ENCODE measurements at regions of chr7 and their contacts with region 1.

Region 1: GRCh38 chr7:22945584-22945983 is 68.3 kb downstream of the HYCC1 start:
- DNase-seq: peak in 1 of 2 donors; percentile 14
- ATAC-seq: no peak
- H3K4me3 ChIP-seq: no peak overlapping the region
- H3K27ac ChIP-seq: no peak overlapping the region
- H3K4me1 ChIP-seq: peaks cover 0 to 9% (median 5%) of the 10 kb centered on the region in 9 donors
- H3K27me3 ChIP-seq: no peaks in the 10 kb centered on the region
- CTCF ChIP-seq: no peak

Region 2: GRCh38 chr7:22980422-22980821 is 34.8 kb after region 1 on chr7:
- intact Hi-C with region 1: no loop called
- DNase-seq: no peak
- ATAC-seq: peak in 1 of 8 donors; percentile 62
- H3K4me3 ChIP-seq: no peak overlapping the region
- H3K27ac ChIP-seq: peak overlapping the region in 1 of 10 donors; percentile 10
- H3K4me1 ChIP-seq: peaks cover 0 to 11% (median 0%) of the 10 kb centered on the region in 9 donors
- H3K27me3 ChIP-seq: no peaks in the 10 kb centered on the region
- CTCF ChIP-seq: no peak

Region 3: DNA sequence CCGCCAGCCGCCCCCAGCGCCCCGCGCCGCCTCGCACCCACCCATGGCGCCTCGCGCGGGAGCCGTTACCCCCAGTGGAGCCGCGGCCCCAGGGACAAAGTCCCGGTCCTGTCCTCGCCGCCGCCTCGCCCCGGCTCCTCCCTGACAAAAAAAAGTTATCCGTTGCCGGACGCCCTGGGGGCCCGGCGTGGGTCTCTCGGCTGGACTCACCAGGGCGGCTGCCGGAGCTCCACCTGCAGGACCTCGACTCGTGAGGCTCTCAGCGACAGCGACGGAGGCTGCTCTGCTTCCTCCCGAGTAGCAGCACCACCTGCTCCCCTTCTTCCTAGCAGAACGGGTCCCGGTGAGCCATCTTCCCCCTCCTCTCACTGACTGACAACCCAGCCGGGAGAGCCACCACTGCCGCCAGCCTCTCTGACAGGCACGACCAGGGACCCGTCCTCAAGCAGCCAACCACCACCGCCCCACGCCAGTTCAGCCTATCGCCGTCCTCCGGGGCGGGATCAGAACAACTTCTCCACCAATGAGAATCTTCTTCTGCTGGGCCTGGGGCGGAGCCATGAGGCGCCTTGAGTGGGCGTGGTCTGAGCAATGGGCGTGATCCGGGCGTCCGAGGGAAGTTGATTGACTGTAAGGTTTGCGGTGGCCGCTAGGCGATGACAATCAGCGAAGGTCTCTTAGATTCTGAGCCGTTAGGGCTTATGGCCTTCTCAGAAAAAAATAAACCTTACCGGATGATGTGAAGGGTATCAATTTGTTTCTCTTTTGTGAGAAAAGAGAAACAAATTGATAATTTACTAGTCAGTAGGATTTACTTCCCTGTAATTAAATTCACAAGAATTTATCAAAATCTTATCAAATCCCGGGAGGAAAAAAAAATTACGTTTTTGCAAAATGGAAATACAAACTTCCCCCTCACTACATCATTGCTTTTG is 68.4 kb after region 1 on chr7 and contains the start of gene HYCC1:
- intact Hi-C with region 1: loop called in 1 of 10 experiments (anchors 10 kb)
- DNase-seq: peak; percentile 98 to 99
- ATAC-seq: peak; percentile 99 to 100 (median 100)
- H3K4me3 ChIP-seq: peak within 1 kb of the TSS; percentile 60 to 96 (median 84)
- H3K27ac ChIP-seq: peak within 1 kb of the TSS; percentile 19 to 93 (median 86)
- H3K4me1 ChIP-seq: peaks cover 0 to 57% (median 38%) of the 10 kb centered on the region in 9 donors
- H3K27me3 ChIP-seq: no peaks in the 10 kb centered on the region
- CTCF ChIP-seq: peak; percentile 38 to 75 (median 67)
- total RNA-seq, gene HYCC1: 26.2 to 39.6 (median 34.5) TPM